Activated CD4-positive, alpha-beta T cell treated with anti-CD3 and anti-CD28 coated beads, Interleukin-2, amount 10 ng/mL, durations not matched to agents 24 days and 14 days (primary cell): ENCODE measurements at regions of chr2 and their contacts with region 1.

Region 1: DNA sequence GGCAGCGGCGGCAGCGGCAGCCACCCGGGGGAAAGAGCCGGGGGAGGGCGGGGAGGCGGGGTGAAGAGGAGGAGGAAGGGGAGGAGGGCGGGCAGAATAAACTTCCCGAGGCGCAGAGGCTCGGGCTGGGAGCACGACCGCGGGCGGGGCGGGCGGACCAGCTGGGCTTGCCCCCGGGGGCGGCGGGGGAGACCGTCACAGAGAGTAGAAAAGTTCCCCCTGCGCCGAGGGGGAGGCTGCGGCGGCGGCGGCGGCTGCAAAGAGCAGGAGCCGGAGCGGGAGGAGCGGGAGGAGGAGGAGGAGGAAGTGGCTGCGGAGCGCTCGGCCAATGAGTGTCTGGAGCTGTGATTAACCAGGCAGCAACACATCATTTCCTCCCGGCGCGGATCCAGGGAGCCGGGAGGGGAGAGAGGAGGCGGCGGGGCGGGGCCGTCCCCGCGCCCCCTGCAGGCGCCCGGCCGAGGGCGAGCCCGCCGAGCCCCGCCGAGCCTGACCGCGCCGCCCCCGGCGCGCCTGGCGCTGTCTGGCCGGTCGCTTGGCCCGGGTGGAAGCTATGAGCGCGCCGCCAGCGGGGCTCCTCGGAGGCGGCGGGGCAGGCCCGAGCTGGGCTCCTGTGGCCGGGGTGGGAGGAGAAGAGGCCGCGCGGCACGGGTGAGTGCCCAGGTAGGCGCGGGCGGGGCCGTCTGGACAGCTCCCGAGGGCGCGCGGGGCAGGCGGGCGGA is at the start of gene ACVR1:
- DNase-seq: peak; percentile 95
- H3K4me3 Mint-ChIP-seq: peak within 1 kb of the TSS; percentile 86
- H3K27ac Mint-ChIP-seq: peak within 1 kb of the TSS; percentile 95
- H3K4me1 Mint-ChIP-seq: peaks cover 56% of the 10 kb centered on the region
- H3K27me3 Mint-ChIP-seq: no peaks in the 10 kb centered on the region
- total RNA-seq, gene ACVR1: 45.5 and 50.7 TPM in 2 replicates

Region 2: DNA sequence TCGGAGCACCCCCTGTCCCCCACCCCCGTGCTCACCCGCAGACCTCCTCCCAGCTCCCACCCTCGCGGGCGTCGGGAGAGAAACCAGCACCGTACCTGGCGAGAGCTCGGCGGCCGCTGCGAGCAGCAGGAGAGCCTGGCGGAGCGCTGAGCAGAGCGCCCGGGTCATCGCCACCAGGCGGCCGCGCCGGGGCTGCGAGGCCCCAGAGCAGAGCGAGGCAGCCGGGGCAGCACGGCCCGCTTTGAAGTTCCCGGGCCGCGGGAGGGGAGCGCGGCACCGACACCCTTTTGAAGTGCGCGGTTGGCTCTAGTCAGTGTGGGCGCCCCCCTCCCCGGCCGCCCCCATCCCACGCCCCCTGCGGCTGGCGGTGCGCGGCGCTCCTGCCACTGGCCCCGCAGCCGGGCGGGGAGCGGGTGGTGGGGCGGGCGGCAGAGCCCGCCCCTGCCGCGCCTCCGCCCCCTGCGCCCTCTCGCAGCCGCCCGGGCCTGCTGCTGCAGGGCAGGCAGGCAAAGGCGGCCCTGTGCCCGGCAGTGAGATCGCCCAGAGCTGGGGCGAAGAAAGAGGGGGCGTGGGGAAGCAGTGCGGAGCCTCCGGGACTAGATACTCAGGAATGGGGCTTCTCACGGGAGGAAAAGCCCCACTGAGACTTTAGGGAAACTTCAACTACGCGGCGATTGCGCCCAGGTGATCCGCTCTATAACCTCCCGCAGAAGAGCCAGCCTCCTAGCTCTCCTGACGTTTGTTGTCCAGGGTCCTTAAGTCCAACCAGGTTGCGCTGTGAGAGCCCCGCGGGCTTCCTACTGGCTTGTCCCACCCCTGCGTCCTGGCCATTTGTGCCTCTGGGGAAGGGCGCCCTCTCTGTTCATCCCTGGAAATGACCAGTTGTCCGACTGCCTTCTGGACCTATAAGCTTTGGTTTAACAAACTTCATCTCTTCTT is 247.5 kb before region 1 on chr2 and contains the start of gene ACVR1C:
- intact Hi-C with region 1: loop called (anchors 1 kb)
- DNase-seq: peak; percentile 90
- H3K4me3 Mint-ChIP-seq: peak within 1 kb of the TSS; percentile 91
- H3K27ac Mint-ChIP-seq: peak within 1 kb of the TSS; percentile 66
- H3K4me1 Mint-ChIP-seq: peaks cover 24% of the 10 kb centered on the region
- H3K27me3 Mint-ChIP-seq: peaks cover 27% of the 10 kb centered on the region
- total RNA-seq, gene ACVR1C: 0.98 and 1.0 TPM in 2 replicates

Region 3: GRCh38 chr2:157838442-157839161 is 37.6 kb before region 1 on chr2:
- intact Hi-C with region 1: loop called (anchors 2 kb)
- DNase-seq: peak; percentile 72
- H3K4me3 Mint-ChIP-seq: peak overlapping the region; percentile 61
- H3K27ac Mint-ChIP-seq: peak overlapping the region; percentile 83
- H3K4me1 Mint-ChIP-seq: peaks cover 49% of the 10 kb centered on the region
- H3K27me3 Mint-ChIP-seq: no peaks in the 10 kb centered on the region

Region 4: GRCh38 chr2:157864857-157865430 is 11.3 kb before region 1 on chr2:
- intact Hi-C with region 1: loop called (anchors 1 kb)
- DNase-seq: no peak
- H3K4me3 Mint-ChIP-seq: peak overlapping the region; percentile 46
- H3K27ac Mint-ChIP-seq: peak overlapping the region; percentile 82
- H3K4me1 Mint-ChIP-seq: peaks cover 35% of the 10 kb centered on the region
- H3K27me3 Mint-ChIP-seq: no peaks in the 10 kb centered on the region

Region 5: GRCh38 chr2:157971697-157972096 is 95.5 kb after region 1 on chr2:
- intact Hi-C with region 1: no loop called
- DNase-seq: no peak
- H3K4me3 Mint-ChIP-seq: no peak overlapping the region
- H3K27ac Mint-ChIP-seq: no peak overlapping the region
- H3K4me1 Mint-ChIP-seq: peaks cover 2% of the 10 kb centered on the region
- H3K27me3 Mint-ChIP-seq: peaks cover 6% of the 10 kb centered on the region

Region 6: DNA sequence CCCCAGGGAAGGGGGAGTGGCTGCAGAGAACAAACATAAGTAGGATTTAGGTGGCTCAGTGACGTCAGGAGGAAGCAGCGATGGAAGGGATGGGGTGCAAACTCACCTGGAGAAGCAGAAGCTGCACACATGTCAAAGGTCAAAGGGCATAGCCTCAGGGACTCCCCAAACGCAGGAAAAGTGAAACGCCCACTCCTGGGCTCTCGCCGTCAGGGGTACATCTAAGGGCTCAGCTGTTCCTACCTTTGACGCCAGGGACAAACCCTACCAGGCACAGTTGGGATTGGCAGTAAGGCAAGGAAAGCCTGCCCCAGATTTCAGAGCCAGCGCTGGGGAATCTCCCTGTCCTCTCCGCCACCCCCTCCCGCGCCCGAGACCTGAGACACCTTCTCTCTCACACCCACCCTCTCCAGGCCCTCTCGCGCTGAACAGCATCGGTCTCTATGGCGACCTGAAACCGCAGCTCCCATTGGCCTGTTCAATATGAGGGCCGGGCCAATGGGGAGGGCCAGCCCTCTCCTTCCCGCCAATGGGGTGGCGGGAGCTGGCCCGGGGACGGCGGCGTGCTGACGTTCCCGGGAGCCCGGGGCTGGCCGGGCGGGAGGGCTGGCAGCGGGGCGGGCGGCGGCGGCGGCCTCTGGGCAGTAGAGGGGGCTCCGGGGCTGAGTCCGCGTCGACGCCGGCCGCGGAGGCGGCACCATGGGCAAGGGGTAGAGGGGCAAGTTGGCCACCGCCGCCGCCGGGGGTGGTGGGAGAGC is 580.3 kb after region 1 on chr2 and contains the starts of genes CCDC148 and PKP4:
- intact Hi-C with region 1: loop called (anchors 10 kb)
- DNase-seq: peak; percentile 97
- H3K4me3 Mint-ChIP-seq: peak within 1 kb of the TSS; percentile 91
- H3K27ac Mint-ChIP-seq: peak within 1 kb of the TSS; percentile 94
- H3K4me1 Mint-ChIP-seq: peaks cover 19% of the 10 kb centered on the region
- H3K27me3 Mint-ChIP-seq: peaks cover 42% of the 10 kb centered on the region
- total RNA-seq, gene CCDC148: not detected in 2 replicates
- total RNA-seq, gene PKP4: 31.5 and 32.6 TPM in 2 replicates